ENCODE measurements at regions of chr19 and their contacts with region 1.

Region 1: DNA sequence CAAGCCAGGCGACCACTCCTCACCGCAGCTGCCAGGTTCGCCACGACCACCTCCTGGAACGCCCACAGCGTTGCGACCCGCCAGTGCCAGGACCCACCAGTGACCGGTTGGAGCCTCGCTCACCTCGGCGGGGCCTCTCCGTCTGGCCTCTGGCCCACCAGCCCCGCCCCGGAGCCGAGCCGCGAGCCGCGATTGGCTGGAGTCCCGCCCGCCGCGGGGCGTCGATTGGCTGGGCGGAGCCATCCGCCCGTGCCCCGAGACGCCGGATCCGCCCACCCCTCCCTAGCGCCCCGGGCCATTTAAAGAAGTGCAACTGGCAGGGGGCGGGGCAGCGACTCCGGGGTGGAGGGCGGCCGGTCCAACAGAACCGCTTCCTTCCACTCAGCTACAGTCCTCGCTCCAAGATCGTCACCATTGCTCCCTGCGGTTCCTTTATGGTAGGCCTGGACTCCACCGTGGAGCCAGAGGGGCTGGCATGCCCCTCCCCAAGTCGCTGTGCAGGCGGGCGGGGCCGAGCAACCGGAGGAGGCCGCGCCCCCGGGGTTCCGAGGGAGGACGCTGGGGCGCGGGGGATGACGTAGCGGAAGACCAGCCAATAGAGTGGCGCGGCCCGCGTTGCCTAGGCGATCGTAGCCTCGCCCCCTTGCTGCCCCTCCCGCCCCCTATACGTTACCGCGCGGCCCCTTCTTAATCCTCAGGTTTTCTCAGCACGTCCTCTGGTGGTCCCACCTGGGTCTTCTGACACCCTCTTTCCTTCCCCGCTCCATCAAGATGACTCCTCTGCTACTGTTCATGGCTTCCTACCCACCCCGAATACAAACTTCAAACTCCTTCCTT is at the start of gene SERTAD3:
- DNase-seq: peak; percentile 87
- ATAC-seq: peak; percentile 85
- H3K4me3 ChIP-seq: peak within 1 kb of the TSS; percentile 88 to 99 (median 92)
- H3K27ac ChIP-seq: peak within 1 kb of the TSS; percentile 98
- H3K4me1 ChIP-seq: peaks cover 12% of the 10 kb centered on the region
- H3K27me3 ChIP-seq: peaks cover 0 to 5% of the 10 kb centered on the region in 2 experiments; a peak in 1 of 5 replicates
- CTCF ChIP-seq: peak; percentile 78
- EP300 ChIP-seq: no peak
- POLR2A ChIP-seq: peak; percentile 87 to 97
- RAD21 ChIP-seq: peak; percentile 31
- total RNA-seq, gene SERTAD3: 16.9 and 17.8 TPM in 2 replicates

Region 2: GRCh38 chr19:39397360-39398296 is 1046.8 kb before region 1 on chr19:
- CTCF ChIA-PET with region 1: no interaction called
- POLR2A ChIA-PET with region 1: no interaction called
- in situ Hi-C with region 1: no loop called
- intact Hi-C with region 1: loop called (anchors 5 kb)
- DNase-seq: peak; percentile 95
- ATAC-seq: peak; percentile 72
- H3K4me3 ChIP-seq: peak overlapping the region; percentile 29 to 57 (median 34)
- H3K27ac ChIP-seq: peak overlapping the region; percentile 98
- H3K4me1 ChIP-seq: peaks cover 59% of the 10 kb centered on the region
- H3K27me3 ChIP-seq: no peaks in the 10 kb centered on the region
- CTCF ChIP-seq: peak; percentile 100
- EP300 ChIP-seq: peak; percentile 45 to 66; a peak in 3 of 4 replicates
- POLR2A ChIP-seq: peak; percentile 89 to 95
- RAD21 ChIP-seq: peak; percentile 100

Region 3: DNA sequence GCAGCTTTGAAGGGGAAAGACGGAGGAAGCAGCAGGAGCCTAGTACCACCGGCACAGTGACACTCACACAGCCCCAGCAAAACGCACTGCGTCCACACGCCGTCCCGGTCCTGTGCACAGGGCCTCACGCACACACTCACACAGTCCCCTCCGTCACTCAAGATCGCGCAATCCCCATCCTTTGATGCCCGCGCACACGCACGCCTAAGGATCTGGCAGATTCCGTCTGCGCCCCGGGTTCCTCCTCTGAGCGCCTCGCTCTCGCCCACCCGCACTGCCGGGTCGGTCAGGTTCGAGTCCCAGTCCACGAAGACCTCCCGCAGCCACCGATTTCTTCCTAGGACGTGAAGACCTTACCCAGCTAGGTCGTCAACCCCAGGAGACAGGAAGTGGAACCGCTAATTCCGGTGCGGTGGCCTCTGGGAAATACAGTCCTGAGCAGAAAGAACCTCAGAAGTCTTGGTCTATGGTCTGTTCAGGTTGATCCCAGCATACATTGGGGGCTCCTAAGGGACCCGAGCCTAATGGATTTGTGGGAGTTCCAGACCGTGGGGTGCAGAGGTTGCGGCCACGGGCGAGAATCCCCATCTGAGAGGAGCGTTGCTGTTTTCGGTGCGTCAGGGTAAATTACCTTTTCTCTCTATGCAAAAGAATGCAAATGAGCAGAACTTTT is 388.4 kb before region 1 on chr19 and contains the start of gene ZNF780B:
- CTCF ChIA-PET with region 1: no interaction called
- POLR2A ChIA-PET with region 1: no interaction called
- in situ Hi-C with region 1: no loop called
- intact Hi-C with region 1: no loop called
- DNase-seq: peak; percentile 68
- ATAC-seq: peak; percentile 98
- H3K4me3 ChIP-seq: peak within 1 kb of the TSS; percentile 80 to 90 (median 84)
- H3K27ac ChIP-seq: peak within 1 kb of the TSS; percentile 65
- H3K4me1 ChIP-seq: peaks cover 43% of the 10 kb centered on the region
- H3K27me3 ChIP-seq: no peaks in the 10 kb centered on the region; a peak in 1 of 5 replicates
- CTCF ChIP-seq: no peak
- EP300 ChIP-seq: peak in 1 of 2 experiments; percentile 15; a peak in 1 of 4 replicates
- POLR2A ChIP-seq: peak; percentile 41 to 80
- RAD21 ChIP-seq: no peak; the same call in 1 of the 2 replicates
- total RNA-seq, gene ZNF780B: 21.9 and 25.0 TPM in 2 replicates

Region 4: DNA sequence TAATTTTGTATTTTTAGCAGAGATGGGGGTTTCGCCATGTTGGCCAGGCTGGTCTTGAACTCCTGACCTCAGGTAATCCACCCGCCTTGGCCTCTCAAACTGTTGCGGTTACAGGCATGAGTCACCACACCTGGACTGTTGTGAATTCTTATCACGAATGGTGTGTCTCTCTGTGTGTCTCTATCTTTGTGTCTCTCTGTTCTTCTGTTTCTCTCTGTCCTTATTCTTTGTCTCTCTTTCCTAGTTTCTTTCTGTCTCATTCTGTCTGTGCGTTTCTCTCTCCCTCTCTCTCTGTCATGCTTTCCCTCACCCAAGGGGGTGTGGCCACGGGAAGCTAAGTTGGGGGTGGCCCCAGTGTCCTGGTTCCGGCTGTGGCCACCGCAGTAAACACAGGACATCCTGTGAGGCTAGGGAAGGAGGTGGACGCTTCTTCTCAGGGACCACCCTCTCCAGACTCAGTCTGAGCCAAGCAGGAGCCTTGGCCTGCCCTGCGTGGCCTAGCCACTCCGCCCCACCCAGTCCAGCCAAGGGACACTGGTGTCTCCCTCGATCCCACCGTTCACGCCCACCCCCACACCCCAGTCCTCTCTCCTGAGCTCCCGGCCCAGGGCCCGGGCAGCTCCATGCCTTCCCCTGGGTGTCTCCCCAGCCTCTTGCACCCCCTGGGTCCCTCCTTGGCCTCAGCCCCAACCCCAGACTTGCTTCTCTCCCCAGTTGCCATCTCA is 27.3 kb before region 1 on chr19:
- CTCF ChIA-PET with region 1: interaction called, 5 read pairs
- POLR2A ChIA-PET with region 1: interaction called, 50 read pairs
- in situ Hi-C with region 1: no loop called
- intact Hi-C with region 1: loop called (anchors 2 kb)
- DNase-seq: peak; percentile 51
- ATAC-seq: peak; percentile 18
- H3K4me3 ChIP-seq: peak overlapping the region in 2 of 3 experiments; percentile 50 to 65; a peak in 5 of 6 replicates
- H3K27ac ChIP-seq: no peak overlapping the region
- H3K4me1 ChIP-seq: peaks cover 48% of the 10 kb centered on the region
- H3K27me3 ChIP-seq: 0 out of 5 replicates have a peak, but pooled peaks cover 0 to 10% of the 10 kb centered on the region in 2 experiments
- CTCF ChIP-seq: no peak
- EP300 ChIP-seq: no peak
- POLR2A ChIP-seq: peak; percentile 31 to 68; a peak in 2 of 4 replicates
- RAD21 ChIP-seq: no peak

Region 5: DNA sequence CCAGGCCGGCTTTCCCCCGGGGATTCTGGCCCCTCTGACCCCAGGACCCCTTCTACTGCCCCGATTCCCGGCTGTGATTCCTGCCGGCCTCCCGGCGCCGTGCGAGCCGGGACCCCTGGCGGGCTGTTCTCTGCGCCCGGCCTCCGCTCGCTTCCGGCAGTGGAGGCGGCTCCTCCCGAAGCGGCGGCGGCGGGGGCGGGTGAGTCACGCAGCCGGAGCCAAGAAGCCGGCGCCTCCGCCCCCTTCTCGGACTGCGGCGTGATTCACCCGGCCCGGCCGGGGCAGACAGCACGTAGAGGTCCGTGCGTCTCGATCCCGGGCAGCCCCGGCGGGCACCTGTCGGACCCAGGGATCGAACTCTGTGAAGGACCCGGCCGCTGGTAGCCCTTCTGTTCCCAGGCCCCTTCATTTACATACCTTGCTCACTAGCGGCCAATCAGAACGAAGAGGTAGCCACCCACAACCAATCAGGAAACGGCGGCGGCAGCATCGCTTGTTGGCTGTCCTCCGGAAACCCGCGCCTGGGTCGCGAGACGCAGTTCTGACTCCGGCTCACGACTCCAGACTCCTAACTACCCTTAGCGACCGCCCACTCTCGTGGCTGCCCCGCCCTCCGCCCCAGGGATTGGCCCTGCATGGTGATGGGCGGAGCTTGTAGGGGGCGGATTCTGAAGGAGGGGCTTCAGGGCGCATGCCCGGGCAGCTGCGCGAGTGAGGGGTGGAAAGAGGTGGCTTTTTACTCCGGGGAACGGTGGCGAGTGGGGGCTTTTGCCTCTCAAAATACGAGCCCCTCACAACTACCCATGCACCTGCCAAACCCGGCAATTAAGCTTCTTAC is 18.7 kb before region 1 on chr19 and contains the start of gene SERTAD1:
- CTCF ChIA-PET with region 1: interaction called, 5 read pairs
- POLR2A ChIA-PET with region 1: interaction called, 80 read pairs
- in situ Hi-C with region 1: no loop called
- intact Hi-C with region 1: loop called (anchors 2 kb)
- DNase-seq: peak; percentile 98
- ATAC-seq: peak; percentile 88
- H3K4me3 ChIP-seq: peak within 1 kb of the TSS; percentile 63 to 94 (median 86)
- H3K27ac ChIP-seq: peak within 1 kb of the TSS; percentile 96
- H3K4me1 ChIP-seq: peaks cover 48% of the 10 kb centered on the region
- H3K27me3 ChIP-seq: no peaks in the 10 kb centered on the region; a peak in 1 of 5 replicates
- CTCF ChIP-seq: peak; percentile 78
- EP300 ChIP-seq: no peak
- POLR2A ChIP-seq: peak; percentile 97 to 99
- RAD21 ChIP-seq: peak; percentile 43; the same call in 1 of the 2 replicates
- total RNA-seq, gene SERTAD1: 4.3 and 4.7 TPM in 2 replicates

Region 6: GRCh38 chr19:40433391-40434216 is 10.8 kb before region 1 on chr19:
- CTCF ChIA-PET with region 1: no interaction called
- POLR2A ChIA-PET with region 1: interaction called, 60 read pairs
- in situ Hi-C with region 1: no loop called
- intact Hi-C with region 1: loop called (anchors 1 kb)
- DNase-seq: peak; percentile 78
- ATAC-seq: peak; percentile 90
- H3K4me3 ChIP-seq: peak overlapping the region; percentile 51 to 72 (median 71)
- H3K27ac ChIP-seq: peak overlapping the region; percentile 93
- H3K4me1 ChIP-seq: peaks cover 40% of the 10 kb centered on the region
- H3K27me3 ChIP-seq: no peaks in the 10 kb centered on the region; a peak in 1 of 5 replicates
- CTCF ChIP-seq: no peak
- EP300 ChIP-seq: no peak
- POLR2A ChIP-seq: peak; percentile 59 to 81
- RAD21 ChIP-seq: 0 out of 2 replicates have a peak, but pooled peaks have one; percentile 11

Region 7: GRCh38 chr19:40489882-40490230 is 45.4 kb after region 1 on chr19:
- CTCF ChIA-PET with region 1: no interaction called
- POLR2A ChIA-PET with region 1: no interaction called
- in situ Hi-C with region 1: no loop called
- intact Hi-C with region 1: no loop called
- DNase-seq: no peak
- ATAC-seq: no peak
- H3K4me3 ChIP-seq: no peak overlapping the region
- H3K27ac ChIP-seq: no peak overlapping the region
- H3K4me1 ChIP-seq: peaks cover 17% of the 10 kb centered on the region
- H3K27me3 ChIP-seq: peaks cover 1 to 5% of the 10 kb centered on the region in 2 experiments; a peak in 3 of 5 replicates
- CTCF ChIP-seq: no peak
- EP300 ChIP-seq: no peak
- POLR2A ChIP-seq: no peak
- RAD21 ChIP-seq: no peak

Region 8: GRCh38 chr19:40549007-40549708 is 104.7 kb after region 1 on chr19:
- CTCF ChIA-PET with region 1: no interaction called
- POLR2A ChIA-PET with region 1: no interaction called
- in situ Hi-C with region 1: no loop called
- intact Hi-C with region 1: no loop called
- DNase-seq: peak; percentile 49
- ATAC-seq: peak; percentile 95
- H3K4me3 ChIP-seq: peak overlapping the region in 1 of 3 experiments; percentile 42; a peak in 1 of 6 replicates
- H3K27ac ChIP-seq: no peak overlapping the region
- H3K4me1 ChIP-seq: peaks cover 14% of the 10 kb centered on the region
- H3K27me3 ChIP-seq: peaks cover 2 to 14% of the 10 kb centered on the region in 2 experiments; a peak in 4 of 5 replicates
- CTCF ChIP-seq: peak; percentile 77
- EP300 ChIP-seq: no peak
- POLR2A ChIP-seq: no peak
- RAD21 ChIP-seq: peak; percentile 35; the same call in 1 of the 2 replicates